ENCODE measurements at regions of chr4 and their contacts with region 1.

Region 1: DNA sequence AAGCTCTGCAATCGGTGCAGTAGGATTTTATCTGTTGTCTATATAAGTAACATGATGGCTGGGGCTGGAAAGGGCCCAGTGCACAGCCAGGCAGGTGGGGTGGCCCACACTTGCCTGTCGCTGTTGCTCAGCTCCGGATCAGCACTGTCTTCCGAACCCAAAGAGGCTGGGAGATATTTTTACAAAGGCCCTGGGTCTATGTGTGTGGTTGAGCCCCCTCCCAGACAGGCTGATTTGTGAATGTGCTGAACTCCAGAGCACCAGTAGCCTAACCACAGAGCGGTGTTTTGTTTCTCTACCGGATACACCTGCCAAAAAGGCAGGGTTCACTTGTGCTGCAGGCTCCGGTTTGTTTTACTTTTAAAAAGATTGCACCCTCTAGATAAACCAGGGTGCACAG is 33.5 kb upstream of the CHRNA9 start:
- DNase-seq: peak; percentile 49 to 93 (median 78)
- ATAC-seq: peak; percentile 83 to 89
- H3K4me3 Mint-ChIP-seq: peak overlapping the region; percentile 31 to 84 (median 74)
- H3K27ac Mint-ChIP-seq: peak overlapping the region; percentile 82 to 100 (median 98)
- H3K4me1 Mint-ChIP-seq: peaks cover 43 to 90% (median 84%) of the 10 kb centered on the region in 4 donors
- H3K27me3 Mint-ChIP-seq: no peaks in the 10 kb centered on the region

Region 2: GRCh38 chr4:40168070-40168469 is 133.5 kb before region 1 on chr4:
- POLR2A ChIA-PET with region 1: no interaction called
- DNase-seq: no peak
- ATAC-seq: no peak
- H3K4me3 Mint-ChIP-seq: no peak overlapping the region
- H3K27ac Mint-ChIP-seq: peak overlapping the region in 1 of 10 donors; percentile 42
- H3K4me1 Mint-ChIP-seq: peaks cover 5 to 14% (median 11%) of the 10 kb centered on the region in 4 donors
- H3K27me3 Mint-ChIP-seq: no peaks in the 10 kb centered on the region

Region 3: DNA sequence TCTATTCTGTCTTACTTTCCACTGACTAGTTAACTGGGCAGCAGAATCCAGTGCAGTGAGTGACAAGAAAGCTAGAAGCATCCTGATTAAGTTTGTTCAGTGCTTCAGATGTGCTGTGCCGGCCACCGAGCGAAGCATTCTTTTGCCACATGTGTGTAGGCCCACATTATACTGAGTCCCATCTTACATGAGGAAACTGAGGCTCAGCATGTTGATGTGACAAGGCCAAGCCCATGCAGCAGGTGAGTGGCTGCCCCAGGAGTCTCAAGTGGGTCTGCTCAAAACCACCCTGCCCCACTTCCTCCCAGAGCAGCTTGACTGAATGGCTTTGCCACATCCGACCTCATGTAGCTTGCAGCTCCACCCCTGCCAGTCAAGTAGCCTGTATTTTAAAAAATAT is 54.3 kb before region 1 on chr4:
- POLR2A ChIA-PET with region 1: interaction called, 31 read pairs
- DNase-seq: peak in 9 of 10 donors; percentile 52 to 86 (median 70)
- ATAC-seq: peak; percentile 69 to 86
- H3K4me3 Mint-ChIP-seq: peak overlapping the region in 9 of 10 donors; percentile 49 to 84 (median 76)
- H3K27ac Mint-ChIP-seq: peak overlapping the region; percentile 94 to 98 (median 96)
- H3K4me1 Mint-ChIP-seq: peaks cover 53 to 90% (median 82%) of the 10 kb centered on the region in 4 donors
- H3K27me3 Mint-ChIP-seq: no peaks in the 10 kb centered on the region

Region 4: DNA sequence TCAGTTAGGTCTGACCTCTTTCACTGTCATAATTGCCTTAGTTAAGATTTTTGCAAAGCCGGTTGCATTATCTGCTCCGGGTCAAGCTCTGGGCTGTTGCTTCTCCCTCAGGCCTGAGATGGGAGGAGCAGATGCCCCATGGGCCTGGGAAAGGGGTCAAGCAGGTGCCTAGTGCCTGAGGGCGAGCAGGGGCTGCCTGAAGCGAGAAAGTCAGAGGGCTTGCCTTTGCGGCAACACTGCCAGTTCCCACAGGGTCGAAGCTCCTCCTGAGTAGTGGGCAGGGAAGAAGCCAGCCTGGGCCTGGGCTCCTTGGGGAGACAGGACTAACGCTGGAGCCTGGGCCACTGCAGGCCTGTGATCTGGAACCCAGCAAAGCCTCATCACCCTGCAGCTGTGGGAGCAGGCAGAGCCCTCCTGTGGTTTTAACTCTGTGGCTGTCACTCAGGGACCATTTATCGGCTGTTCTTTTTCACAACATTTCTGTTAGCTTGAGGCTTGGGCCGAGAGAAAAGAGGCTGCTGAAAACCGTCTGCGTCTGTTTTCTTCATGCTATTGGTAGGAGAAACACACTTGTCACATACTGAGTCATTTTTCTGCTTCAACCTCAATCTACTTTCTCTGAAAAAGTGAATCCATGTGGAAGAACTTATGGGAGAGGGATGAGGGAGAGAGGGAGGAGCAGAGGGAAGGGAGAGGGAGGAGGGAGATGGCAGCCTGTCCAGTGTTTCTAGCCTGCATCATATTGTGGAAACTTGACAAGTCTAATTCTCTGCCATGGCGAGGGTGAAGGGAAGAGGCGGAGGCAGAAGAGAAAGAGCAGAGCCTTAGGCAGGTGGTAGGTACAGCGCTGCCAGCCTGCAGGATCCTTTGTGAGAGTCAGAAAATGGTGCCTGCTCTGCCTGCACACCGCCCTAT is 36.4 kb before region 1 on chr4:
- POLR2A ChIA-PET with region 1: interaction called, 29 read pairs
- DNase-seq: peak in 9 of 10 donors; percentile 28 to 82 (median 59)
- ATAC-seq: peak; percentile 81 to 83
- H3K4me3 Mint-ChIP-seq: peak overlapping the region; percentile 68 to 91 (median 84)
- H3K27ac Mint-ChIP-seq: peak overlapping the region; percentile 94 to 99 (median 98)
- H3K4me1 Mint-ChIP-seq: peaks cover 37 to 76% (median 70%) of the 10 kb centered on the region in 4 donors
- H3K27me3 Mint-ChIP-seq: no peaks in the 10 kb centered on the region

Region 5: GRCh38 chr4:40289366-40290188 is 12.0 kb before region 1 on chr4:
- POLR2A ChIA-PET with region 1: interaction called, 52 read pairs
- DNase-seq: peak in 5 of 10 donors; percentile 24 to 60 (median 58)
- ATAC-seq: peak; percentile 85 to 95
- H3K4me3 Mint-ChIP-seq: peak overlapping the region; percentile 26 to 90 (median 69)
- H3K27ac Mint-ChIP-seq: peak overlapping the region; percentile 82 to 97 (median 94)
- H3K4me1 Mint-ChIP-seq: peaks cover 36 to 85% (median 76%) of the 10 kb centered on the region in 4 donors
- H3K27me3 Mint-ChIP-seq: no peaks in the 10 kb centered on the region

Region 6: DNA sequence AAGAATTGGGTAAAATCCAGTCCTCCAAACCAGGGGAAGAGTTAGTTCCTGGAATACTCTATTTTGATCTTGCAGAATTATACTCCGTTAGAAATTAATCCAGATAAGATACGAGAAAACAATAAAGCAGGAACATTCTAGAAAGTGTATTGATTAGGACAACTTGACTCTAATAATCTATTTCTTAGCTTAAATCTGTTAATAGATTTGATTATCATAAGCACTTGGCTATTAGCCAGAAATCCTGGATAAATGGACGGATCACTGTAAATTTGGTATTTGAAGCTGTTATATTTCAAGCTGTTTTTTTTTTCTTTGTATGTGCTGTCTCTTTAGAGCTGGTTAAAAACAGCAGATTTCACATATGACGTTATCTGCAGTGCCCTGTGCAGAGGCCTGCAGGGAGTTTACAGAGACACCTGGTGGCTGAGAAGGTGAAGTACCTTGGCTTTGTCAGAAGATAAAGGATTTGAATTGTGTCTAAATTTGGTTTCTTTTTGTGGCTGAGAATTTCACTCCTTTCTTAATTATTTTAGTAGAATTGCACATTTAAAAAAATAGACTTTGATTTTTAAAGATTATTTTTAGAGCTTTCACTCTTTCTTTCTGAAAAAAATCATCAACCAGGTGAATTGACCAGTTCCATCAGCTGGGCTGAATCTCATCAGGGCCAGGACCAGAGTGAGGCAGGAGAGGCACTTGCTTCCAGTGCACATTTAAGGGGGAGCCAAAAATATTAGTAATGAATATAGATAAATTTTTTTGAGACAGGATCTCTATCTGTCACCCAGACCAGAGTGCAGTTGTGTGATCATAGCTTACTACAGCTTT is 23.8 kb after region 1 on chr4:
- POLR2A ChIA-PET with region 1: no interaction called
- DNase-seq: peak; percentile 24 to 88 (median 70)
- ATAC-seq: peak; percentile 99
- H3K4me3 Mint-ChIP-seq: peak overlapping the region in 3 of 10 donors; percentile 2 to 12 (median 3)
- H3K27ac Mint-ChIP-seq: peak overlapping the region in 9 of 10 donors; percentile 2 to 90 (median 56)
- H3K4me1 Mint-ChIP-seq: peaks cover 10 to 32% (median 21%) of the 10 kb centered on the region in 4 donors
- H3K27me3 Mint-ChIP-seq: peaks cover 0 to 5% (median 0%) of the 10 kb centered on the region in 5 donors

Region 7: DNA sequence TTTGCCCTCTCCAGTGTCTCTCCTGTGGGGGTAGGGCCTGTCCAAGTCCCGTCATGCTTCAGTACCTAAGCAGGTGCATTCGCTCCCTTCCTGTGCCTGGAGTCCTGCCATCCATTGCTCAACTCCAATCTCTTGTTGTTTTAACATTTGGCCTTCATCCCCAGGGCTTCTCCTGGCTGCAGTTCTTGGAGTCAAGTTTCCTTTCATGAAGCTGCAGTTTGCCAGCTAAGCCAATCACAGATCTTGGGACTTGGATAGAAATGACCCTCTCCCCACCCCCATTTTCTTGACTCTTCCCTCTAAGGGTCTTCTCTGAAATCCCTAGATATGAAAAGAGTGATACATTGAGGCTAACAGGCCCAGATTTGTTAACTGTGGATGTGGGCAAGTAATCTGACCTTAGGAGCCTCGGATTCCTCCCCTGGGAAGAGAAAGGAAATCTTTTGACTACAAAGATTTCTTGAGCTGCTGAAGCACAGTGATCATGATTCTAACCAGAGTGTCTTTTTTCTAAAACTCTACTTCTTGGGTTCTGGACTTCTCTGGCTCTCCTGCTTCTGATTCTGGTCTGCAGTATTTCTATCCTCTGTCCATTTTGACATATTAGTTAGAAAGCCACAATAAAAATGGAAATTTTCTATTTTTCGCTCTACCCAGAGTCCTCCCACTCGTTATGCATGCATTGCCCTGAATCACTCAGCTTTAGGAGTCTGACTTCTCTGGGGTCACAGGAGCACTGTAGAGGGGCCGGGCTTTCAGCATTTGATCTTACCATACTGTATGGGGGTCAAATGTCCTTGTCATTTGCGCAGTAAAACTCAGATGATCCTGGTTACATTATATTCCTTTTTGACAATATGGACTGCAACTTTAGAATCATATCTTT is 94.5 kb after region 1 on chr4:
- POLR2A ChIA-PET with region 1: no interaction called
- DNase-seq: no peak
- ATAC-seq: no peak
- H3K4me3 Mint-ChIP-seq: no peak overlapping the region
- H3K27ac Mint-ChIP-seq: peak overlapping the region in 1 of 10 donors; percentile 73
- H3K4me1 Mint-ChIP-seq: no peaks in the 10 kb centered on the region
- H3K27me3 Mint-ChIP-seq: no peaks in the 10 kb centered on the region

Measured in naive thymus-derived CD8-positive, alpha-beta T cell (primary cell).